ENCODE measurements at regions of chr10 and their contacts with region 1.

Region 1: GRCh38 chr10:72834183-72834825 is 59.2 kb upstream of the OIT3 start:
- DNase-seq: peak; percentile 28
- ATAC-seq: peak; percentile 66
- H3K4me3 ChIP-seq: no peak overlapping the region
- H3K27ac ChIP-seq: no peak overlapping the region
- H3K4me1 ChIP-seq: no peaks in the 10 kb centered on the region
- H3K27me3 ChIP-seq: no peaks in the 10 kb centered on the region
- CTCF ChIP-seq: peak; percentile 40 to 73 (median 56); a peak in 5 of 6 replicates
- EP300 ChIP-seq: no peak
- POLR2A ChIP-seq: no peak
- RAD21 ChIP-seq: peak; percentile 86

Region 2: GRCh38 chr10:72375585-72375984 is 458.7 kb before region 1 on chr10:
- CTCF ChIA-PET with region 1: interaction called, 5 read pairs
- POLR2A ChIA-PET with region 1: interaction called, 4 read pairs
- RAD21 ChIA-PET with region 1: interaction called, 17 read pairs
- SMC1A ChIA-PET with region 1: interaction called, 4 read pairs
- in situ Hi-C with region 1: no loop called
- intact Hi-C with region 1: no loop called
- DNase-seq: no peak
- ATAC-seq: peak; percentile 76
- H3K4me3 ChIP-seq: no peak overlapping the region
- H3K27ac ChIP-seq: no peak overlapping the region
- H3K4me1 ChIP-seq: no peaks in the 10 kb centered on the region
- H3K27me3 ChIP-seq: no peaks in the 10 kb centered on the region
- CTCF ChIP-seq: peak; percentile 14 to 37 (median 26); a peak in 4 of 6 replicates
- EP300 ChIP-seq: no peak
- POLR2A ChIP-seq: no peak
- RAD21 ChIP-seq: peak; percentile 50

Region 3: DNA sequence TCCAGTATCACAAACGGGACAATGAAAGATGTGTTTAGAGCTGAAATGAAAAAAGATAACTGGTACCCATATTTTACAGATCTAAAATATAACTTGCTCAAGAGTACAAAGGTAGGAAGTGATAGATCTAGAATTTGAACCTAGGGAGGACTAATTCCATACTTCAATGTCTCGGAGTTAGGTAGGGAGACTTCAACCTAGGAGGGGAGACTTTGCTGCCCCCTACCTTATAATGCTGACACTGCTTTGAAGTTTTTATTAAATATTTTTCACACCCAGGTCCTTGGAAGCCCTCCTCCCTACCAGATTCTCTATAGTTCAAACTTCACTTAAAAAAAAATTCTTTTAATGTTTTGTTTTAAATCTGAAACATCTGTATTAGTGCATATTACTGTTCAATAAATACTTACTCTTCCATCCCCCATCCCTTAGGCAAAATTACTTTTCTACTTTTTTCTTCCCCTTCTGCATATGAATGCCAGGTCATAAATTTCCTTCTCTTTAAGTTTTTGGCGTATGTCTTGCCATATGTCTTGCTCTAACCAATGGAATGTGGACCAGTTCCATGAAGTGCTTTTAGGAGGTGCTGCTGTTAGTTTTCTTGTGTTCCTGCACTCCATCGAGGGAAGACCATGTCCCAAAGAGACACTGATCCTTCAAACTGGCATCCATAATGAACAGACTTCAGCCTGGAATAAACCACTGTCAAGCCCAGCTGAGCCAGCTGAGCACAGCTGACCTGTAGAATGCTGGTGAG is 266.2 kb before region 1 on chr10:
- CTCF ChIA-PET with region 1: interaction called, 10 read pairs
- POLR2A ChIA-PET with region 1: no interaction called
- RAD21 ChIA-PET with region 1: no interaction called
- SMC1A ChIA-PET with region 1: interaction called, 3 read pairs
- in situ Hi-C with region 1: no loop called
- intact Hi-C with region 1: no loop called
- DNase-seq: no peak
- ATAC-seq: peak; percentile 52; the same call in 2 of the 3 replicates
- H3K4me3 ChIP-seq: no peak overlapping the region
- H3K27ac ChIP-seq: no peak overlapping the region
- H3K4me1 ChIP-seq: peaks cover 4% of the 10 kb centered on the region; the same call in 1 of the 2 replicates
- H3K27me3 ChIP-seq: no peaks in the 10 kb centered on the region
- CTCF ChIP-seq: peak; percentile 41 to 57 (median 51)
- EP300 ChIP-seq: no peak
- POLR2A ChIP-seq: no peak
- RAD21 ChIP-seq: peak; percentile 63